OCI-LY7 (cell line): ENCODE measurements at regions of chr14 and their contacts with region 1.

Region 1: DNA sequence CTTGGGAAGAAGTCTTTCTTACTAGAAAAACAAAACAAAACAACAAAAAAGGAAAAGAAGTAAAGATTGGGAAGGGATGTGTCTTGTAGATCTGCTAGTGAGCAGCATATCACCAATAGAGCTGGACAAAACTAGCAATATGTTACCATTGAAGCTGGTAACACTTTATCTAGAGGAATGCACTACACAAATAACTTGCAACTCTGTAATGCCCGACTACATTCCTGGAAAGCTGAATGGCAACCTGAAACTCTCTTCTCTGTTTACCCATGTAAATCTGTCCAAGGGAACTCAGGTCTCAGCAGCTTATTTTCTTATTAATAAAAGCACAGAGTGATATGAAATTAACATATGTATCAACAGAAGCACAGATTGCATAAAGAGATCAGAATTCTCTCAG is 624.4 kb downstream of the KCNH5 start:
- DNase-seq: no peak
- H3K4me3 ChIP-seq: no peak overlapping the region
- H3K27ac ChIP-seq: no peak overlapping the region
- H3K4me1 ChIP-seq: no peaks in the 10 kb centered on the region
- CTCF ChIP-seq: no peak

Region 2: DNA sequence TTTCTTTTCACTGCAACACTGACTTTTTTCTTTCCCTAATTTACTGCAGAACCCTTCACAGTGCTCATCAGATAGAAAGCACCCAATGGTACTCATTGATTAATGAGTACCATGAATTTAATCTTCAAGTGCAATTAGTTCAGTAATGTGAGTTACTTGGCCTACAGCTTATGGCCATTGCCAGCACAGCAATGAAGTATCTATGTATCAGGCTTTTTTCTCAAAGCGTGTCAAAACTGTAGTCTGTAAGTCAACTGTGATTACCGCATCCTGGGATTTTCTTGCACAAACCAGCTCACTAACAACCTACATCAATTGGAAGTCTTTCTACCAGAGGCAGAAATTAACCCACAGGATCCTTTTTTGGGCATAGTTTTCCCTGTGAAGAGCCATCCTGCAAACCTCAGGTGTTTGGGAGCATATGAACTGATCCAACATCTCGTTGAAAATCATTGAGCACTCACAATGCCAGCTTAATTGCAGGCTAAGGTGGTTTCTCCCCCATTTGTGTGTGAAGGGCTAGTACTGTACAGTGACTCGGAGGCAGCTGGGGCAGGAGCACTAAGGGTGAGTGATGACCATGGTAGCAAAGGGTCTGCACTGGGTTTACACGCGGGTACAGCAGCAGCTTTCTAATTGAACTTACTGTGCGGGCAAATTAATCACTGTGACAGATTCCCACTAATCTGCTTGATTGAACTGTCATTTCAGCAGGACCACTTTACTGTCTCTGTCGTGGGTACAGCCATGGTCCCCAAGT is 39.4 kb before region 1 on chr14:
- CTCF ChIA-PET with region 1: no interaction called
- POLR2A ChIA-PET with region 1: no interaction called
- intact Hi-C with region 1: loop called (anchors 2 kb)
- DNase-seq: no peak
- H3K4me3 ChIP-seq: no peak overlapping the region
- H3K27ac ChIP-seq: no peak overlapping the region
- H3K4me1 ChIP-seq: no peaks in the 10 kb centered on the region
- CTCF ChIP-seq: no peak